ENCODE measurements at regions of chr9 and their contacts with region 1.

Region 1: GRCh38 chr9:88272986-88273385 is 115.3 kb upstream of the SPIN1 start:
- DNase-seq: no peak
- H3K4me3 ChIP-seq: no peak overlapping the region
- H3K27ac ChIP-seq: no peak overlapping the region
- H3K4me1 ChIP-seq: peaks cover 36% of the 10 kb centered on the region
- H3K27me3 ChIP-seq: no peaks in the 10 kb centered on the region
- CTCF ChIP-seq: no peak

Region 2: DNA sequence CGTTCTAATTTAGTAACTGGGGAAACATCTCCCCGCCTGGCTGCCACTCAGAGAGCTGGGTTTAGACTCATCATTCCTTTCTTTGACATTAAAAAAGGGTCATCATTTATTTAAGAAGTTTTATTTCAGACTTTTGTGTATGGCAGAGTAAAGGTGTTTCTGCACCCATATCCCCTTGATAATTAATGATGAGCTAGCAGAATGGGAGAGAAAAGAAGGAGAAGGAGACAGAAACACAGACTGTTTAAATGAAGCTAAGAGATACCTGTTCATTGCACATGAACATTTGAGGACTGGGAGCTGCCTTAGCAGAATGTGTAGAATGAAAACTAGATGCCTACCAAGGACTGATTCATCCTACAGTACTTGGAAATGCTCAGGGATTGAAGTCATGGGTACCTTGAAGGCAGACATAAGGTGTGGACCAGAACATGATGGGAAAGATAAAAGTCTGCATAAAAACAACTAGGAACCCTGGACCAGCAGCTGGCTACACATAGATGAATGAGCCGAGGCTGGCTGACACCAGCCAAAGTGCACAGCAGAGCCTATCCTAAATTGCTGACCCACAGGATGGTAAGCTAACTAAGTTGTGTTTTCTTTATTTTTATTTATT is 86.4 kb before region 1 on chr9:
- CTCF ChIA-PET with region 1: no interaction called
- POLR2A ChIA-PET with region 1: interaction called, 24 read pairs
- intact Hi-C with region 1: no loop called
- DNase-seq: no peak
- H3K4me3 ChIP-seq: no peak overlapping the region
- H3K27ac ChIP-seq: no peak overlapping the region
- H3K4me1 ChIP-seq: no peaks in the 10 kb centered on the region
- H3K27me3 ChIP-seq: no peaks in the 10 kb centered on the region
- CTCF ChIP-seq: no peak

Region 3: GRCh38 chr9:88197781-88198340 is 75.1 kb before region 1 on chr9:
- CTCF ChIA-PET with region 1: interaction called, 6 read pairs
- POLR2A ChIA-PET with region 1: interaction called, 16 read pairs
- intact Hi-C with region 1: loop called (anchors 1 kb)
- DNase-seq: peak; percentile 46 to 98
- H3K4me3 ChIP-seq: peak overlapping the region; percentile 43; the same call in 1 of the 2 replicates
- H3K27ac ChIP-seq: peak overlapping the region; percentile 96
- H3K4me1 ChIP-seq: peaks cover 47% of the 10 kb centered on the region
- H3K27me3 ChIP-seq: no peaks in the 10 kb centered on the region
- CTCF ChIP-seq: no peak

Region 4: DNA sequence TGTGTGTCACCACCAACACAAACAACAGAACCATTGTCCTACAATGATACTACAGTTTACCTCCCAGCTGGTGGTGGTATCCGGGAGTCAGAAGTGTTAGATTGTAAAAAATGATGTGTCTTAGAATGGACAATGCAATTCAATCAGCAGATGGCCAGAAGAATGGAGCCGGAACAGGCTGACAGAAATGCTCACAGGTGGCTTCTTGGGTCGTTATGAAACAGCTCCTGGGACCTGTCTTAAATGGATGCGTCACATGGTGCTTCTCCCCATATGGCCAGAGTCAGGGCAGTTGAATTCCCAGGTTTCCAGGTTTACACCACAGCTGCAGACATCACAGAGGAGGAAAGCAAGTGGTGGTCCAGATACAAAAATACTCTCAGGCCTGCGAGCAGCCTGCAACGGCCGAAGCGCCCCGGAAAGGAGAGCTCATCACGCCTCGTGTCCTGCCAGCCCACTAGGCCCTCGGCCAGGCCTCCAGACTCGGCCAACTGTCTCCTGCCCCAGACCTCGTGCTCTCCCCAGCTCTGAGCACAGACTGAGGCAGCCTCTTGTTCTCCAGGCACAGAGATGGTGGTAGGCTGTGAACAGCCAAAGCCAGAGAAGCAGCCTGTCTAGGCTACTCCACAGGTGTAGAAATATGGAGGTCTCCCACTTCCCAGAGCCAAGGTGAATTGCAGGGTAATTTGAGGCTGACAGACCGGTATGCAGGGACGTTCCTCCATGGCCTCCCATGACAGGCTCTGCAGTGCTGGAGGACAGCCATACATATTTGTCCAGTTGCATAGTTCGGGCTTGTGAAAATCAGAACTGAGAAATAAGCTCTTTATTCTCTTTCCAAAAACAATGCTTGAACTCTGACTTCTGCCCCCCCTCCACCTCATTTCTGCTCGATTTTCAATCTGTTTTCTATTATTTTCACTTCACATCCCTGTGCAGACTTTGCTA is 36.2 kb before region 1 on chr9:
- CTCF ChIA-PET with region 1: interaction called, 10 read pairs
- POLR2A ChIA-PET with region 1: no interaction called
- intact Hi-C with region 1: no loop called
- DNase-seq: no peak
- H3K4me3 ChIP-seq: no peak overlapping the region
- H3K27ac ChIP-seq: no peak overlapping the region
- H3K4me1 ChIP-seq: no peaks in the 10 kb centered on the region
- H3K27me3 ChIP-seq: no peaks in the 10 kb centered on the region
- CTCF ChIP-seq: no peak

Region 5: GRCh38 chr9:88258027-88258426 is 15.0 kb before region 1 on chr9:
- CTCF ChIA-PET with region 1: no interaction called
- POLR2A ChIA-PET with region 1: interaction called, 10 read pairs
- intact Hi-C with region 1: no loop called
- DNase-seq: no peak
- H3K4me3 ChIP-seq: no peak overlapping the region
- H3K27ac ChIP-seq: no peak overlapping the region
- H3K4me1 ChIP-seq: peaks cover 20% of the 10 kb centered on the region
- H3K27me3 ChIP-seq: no peaks in the 10 kb centered on the region
- CTCF ChIP-seq: no peak

Region 6: GRCh38 chr9:89179895-89180667 is 907.1 kb after region 1 on chr9:
- CTCF ChIA-PET with region 1: no interaction called
- POLR2A ChIA-PET with region 1: interaction called, 17 read pairs
- intact Hi-C with region 1: no loop called
- DNase-seq: peak; percentile 93 to 95
- H3K4me3 ChIP-seq: peak overlapping the region; percentile 62
- H3K27ac ChIP-seq: peak overlapping the region; percentile 78
- H3K4me1 ChIP-seq: peaks cover 34% of the 10 kb centered on the region
- H3K27me3 ChIP-seq: no peaks in the 10 kb centered on the region
- CTCF ChIP-seq: no peak